Posterior vena cava (tissue), 2 donors: ENCODE measurements at regions of chr4 and their contacts with region 1.

Region 1: DNA sequence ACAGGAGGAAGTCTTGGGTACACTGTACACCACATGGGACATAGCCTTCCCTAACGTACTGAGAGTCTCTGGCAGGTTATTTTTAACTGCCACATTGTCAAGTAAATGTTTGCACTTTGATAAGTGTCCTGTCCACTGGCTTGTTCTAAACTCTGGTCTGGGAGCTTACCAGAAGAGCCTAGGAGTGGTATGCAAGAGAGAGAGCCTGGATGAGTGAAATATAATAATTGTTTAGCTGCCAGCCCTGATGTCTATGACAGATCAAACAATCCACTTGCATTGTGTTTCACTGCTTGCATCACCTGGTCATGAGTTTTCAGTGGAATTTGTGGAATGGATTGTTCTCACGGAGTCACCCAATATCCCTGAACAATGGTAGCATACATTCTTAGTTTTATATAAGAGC is 91.6 kb downstream of the SHROOM3 start:
- DNase-seq: no peak

Region 2: DNA sequence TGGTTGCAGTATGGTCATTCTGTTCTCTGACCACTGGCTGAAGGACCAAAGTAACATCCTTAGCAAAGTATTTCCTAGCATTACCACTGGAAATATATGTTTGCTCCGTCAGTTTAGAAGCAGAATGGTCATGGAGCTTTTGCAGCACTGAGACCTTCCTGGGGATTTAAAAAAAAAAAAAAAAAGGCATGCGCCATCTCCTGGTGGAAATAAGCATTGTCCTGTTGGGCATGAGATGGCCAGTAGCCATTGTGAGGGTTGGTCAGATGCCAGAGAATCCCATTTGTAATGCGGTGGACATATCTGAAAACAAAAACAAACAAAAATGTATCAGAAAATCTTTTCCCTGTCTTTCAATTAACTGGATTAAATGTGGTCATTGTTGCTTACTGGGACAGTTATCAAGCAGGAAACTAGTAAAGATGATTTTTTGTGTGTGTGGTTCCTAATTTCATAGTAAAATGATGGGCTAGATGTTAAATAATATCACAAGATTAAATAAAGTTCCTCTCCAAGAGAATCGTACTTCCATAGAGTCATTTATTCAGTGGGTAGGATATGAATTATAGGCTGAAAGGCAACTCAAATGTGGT is 231.8 kb after region 1 on chr4:
- intact Hi-C with region 1: loop called in 1 of 2 experiments (anchors 10 kb)
- DNase-seq: no peak